Dorsolateral prefrontal cortex (tissue), 120 donors: ENCODE measurements at regions of chr15 and their contacts with region 1.

Region 1: DNA sequence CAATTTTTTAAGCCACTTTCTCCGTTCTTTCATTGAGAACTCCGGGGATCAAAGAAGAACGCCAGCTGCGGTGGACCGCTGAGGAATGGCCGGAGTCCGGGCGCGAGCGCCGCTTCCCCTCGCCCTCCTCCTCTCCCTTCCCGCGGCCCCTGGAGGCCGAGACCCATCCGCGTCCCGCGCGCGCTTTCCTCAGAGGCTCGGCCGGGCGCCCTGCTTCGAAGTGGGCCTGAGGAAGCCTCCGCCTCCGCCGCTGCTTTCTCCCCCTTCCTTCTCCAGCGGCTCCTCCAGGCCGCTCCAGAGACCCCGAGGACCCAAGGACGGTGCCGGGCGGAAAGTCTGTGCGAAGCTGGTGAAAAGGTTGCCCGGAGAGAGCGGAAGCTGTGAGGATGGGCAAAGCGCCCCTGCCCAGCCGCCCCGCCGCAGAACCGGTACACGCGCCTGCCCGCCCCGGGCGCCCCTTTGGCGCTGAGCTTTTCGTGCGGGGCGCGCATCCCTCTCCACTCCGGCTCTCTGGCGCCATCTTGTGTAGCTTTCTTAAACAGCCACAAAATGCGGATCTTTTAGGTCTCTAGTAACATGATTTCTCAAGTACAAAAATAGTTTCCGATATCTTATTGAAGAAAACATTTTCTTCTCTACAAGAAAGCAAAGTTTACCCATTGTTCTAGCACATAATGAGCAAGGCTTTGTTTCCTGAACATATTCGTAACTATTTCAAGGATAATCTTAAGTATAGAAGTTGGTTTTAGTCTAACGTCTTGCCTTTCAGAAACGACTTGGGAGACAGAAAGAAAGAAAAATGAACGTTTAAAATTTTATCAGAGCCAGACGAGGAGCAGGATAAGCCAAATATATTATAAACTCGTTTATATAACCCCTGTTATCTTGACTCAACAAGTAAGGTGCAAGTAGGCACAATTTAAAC is 59.2 kb upstream of the FAM174B start:
- DNase-seq: peak in 9 of 10 donors; percentile 55 to 83 (median 75)
- H3K4me3 ChIP-seq: peak overlapping the region; percentile 48 to 89 (median 72)
- H3K27ac ChIP-seq: peak overlapping the region; percentile 13 to 90 (median 80)
- H3K27me3 ChIP-seq: no peaks in the 10 kb centered on the region
- CTCF ChIP-seq: peak; percentile 80 to 98 (median 92)

Region 2: GRCh38 chr15:92097474-92098178 is 617.1 kb before region 1 on chr15:
- intact Hi-C with region 1: loop called in 1 of 2 experiments (anchors 5 kb)
- DNase-seq: peak in 6 of 10 donors; percentile 36 to 60 (median 56)
- H3K4me3 ChIP-seq: peak overlapping the region in 1 of 59 donors; percentile 2
- H3K27ac ChIP-seq: peak overlapping the region in 10 of 59 donors; percentile 5 to 47 (median 26)
- H3K27me3 ChIP-seq: no peaks in the 10 kb centered on the region
- CTCF ChIP-seq: peak; percentile 62 to 94 (median 86)

Region 3: DNA sequence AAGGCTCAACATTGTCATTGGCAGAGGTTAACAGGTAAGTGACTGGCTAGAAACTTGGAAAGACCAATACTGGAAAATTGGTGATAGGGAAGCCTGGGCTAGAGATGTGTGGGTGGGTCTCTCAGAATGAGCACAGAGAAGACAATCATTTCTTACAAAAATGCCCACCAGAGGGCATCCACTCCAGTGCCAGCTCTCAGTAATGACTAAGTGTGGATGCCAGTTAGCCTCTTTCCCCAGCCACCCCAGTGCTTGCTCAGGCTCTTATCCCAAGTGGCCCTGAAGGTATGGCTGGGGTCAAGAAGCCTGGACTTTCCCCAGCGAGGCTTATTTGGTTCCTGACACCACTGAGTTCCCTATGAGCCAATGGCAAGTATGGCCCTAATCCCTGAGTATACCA is 437.0 kb before region 1 on chr15:
- intact Hi-C with region 1: loop called in 1 of 2 experiments (anchors 10 kb)
- DNase-seq: peak in 4 of 10 donors; percentile 4 to 43 (median 29)
- H3K4me3 ChIP-seq: no peak overlapping the region
- H3K27ac ChIP-seq: no peak overlapping the region
- H3K27me3 ChIP-seq: peaks cover 0 to 4% (median 0%) of the 10 kb centered on the region in 45 donors
- CTCF ChIP-seq: peak in 52 of 56 donors; percentile 17 to 60 (median 43)

Region 4: DNA sequence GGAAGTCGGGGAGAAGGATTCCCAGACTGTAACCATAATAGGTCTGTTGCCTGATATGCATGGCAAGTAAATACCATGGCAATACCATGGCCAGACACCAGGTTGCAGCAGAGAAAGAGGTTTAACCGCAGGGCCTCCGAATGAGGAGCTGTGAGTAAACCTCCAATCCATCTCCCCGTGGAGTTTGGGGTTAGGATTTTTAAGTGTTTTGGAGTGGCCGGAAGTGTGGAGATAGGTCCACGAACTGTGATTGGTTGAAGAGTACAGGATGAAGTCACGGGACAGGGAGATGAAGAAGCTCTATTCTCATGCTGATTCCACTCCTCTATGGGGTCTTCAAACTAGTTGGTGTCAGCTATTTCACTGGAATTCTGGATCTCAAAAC is 193.1 kb before region 1 on chr15:
- intact Hi-C with region 1: loop called (anchors 2 to 10 kb)
- DNase-seq: peak; percentile 31 to 89 (median 76)
- H3K4me3 ChIP-seq: no peak overlapping the region
- H3K27ac ChIP-seq: no peak overlapping the region
- H3K27me3 ChIP-seq: no peaks in the 10 kb centered on the region
- CTCF ChIP-seq: peak; percentile 48 to 92 (median 82)

Region 5: GRCh38 chr15:92599394-92599970 is 115.3 kb before region 1 on chr15:
- intact Hi-C with region 1: no loop called
- DNase-seq: no peak
- H3K4me3 ChIP-seq: no peak overlapping the region
- H3K27ac ChIP-seq: no peak overlapping the region
- H3K27me3 ChIP-seq: no peaks in the 10 kb centered on the region
- CTCF ChIP-seq: no peak

Region 6: GRCh38 chr15:92751524-92751923 is 36.8 kb after region 1 on chr15:
- intact Hi-C with region 1: no loop called
- DNase-seq: no peak
- H3K4me3 ChIP-seq: no peak overlapping the region
- H3K27ac ChIP-seq: no peak overlapping the region
- H3K27me3 ChIP-seq: no peaks in the 10 kb centered on the region
- CTCF ChIP-seq: no peak

Region 7: GRCh38 chr15:92903941-92904831 is 189.4 kb after region 1 on chr15:
- intact Hi-C with region 1: loop called in 1 of 2 experiments (anchors 10 kb)
- DNase-seq: peak; percentile 97 to 100 (median 99)
- H3K4me3 ChIP-seq: peak overlapping the region; percentile 45 to 97 (median 73)
- H3K27ac ChIP-seq: peak overlapping the region; percentile 77 to 100 (median 99)
- H3K27me3 ChIP-seq: no peaks in the 10 kb centered on the region
- CTCF ChIP-seq: peak in 26 of 56 donors; percentile 7 to 41 (median 19)